PC-9 (cell line): ENCODE measurements at regions of chr1 and their contacts with region 1.

Region 1: DNA sequence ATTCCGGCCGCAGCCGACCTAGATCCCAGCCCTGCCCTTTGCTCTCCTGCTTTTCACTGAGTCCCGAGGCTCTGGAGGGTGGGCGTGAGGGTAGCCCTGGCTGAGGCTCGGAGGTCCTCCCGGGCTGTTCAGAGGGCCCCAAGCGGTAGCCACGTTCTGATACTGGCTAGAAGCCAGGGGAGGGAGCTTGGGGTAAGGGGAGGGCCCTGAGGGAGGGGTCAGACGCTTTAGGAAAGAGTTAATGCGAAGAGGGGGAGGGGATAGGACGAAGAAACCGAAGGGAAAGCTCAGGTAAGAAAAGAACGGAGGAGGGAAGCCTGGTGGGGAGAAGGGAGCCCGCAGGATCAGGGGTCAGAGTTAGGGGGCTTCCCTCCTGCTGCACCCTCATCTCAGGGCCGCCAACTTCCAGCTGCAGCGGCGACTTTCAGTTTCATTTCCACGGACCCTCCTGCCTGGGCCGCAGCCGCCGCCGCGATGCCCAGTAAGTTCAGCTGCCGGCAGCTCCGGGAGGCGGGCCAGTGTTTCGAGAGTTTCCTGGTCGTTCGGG is at the start of gene MOV10:
- DNase-seq: peak; percentile 64 to 69
- H3K4me3 ChIP-seq: peak within 1 kb of the TSS; percentile 82
- H3K27ac ChIP-seq: peak within 1 kb of the TSS; percentile 48
- H3K4me1 ChIP-seq: peaks cover 21% of the 10 kb centered on the region
- H3K27me3 ChIP-seq: no peaks in the 10 kb centered on the region
- CTCF ChIP-seq: no peak
- total RNA-seq, gene MOV10: 73.7 and 78.3 TPM in 2 replicates

Region 2: DNA sequence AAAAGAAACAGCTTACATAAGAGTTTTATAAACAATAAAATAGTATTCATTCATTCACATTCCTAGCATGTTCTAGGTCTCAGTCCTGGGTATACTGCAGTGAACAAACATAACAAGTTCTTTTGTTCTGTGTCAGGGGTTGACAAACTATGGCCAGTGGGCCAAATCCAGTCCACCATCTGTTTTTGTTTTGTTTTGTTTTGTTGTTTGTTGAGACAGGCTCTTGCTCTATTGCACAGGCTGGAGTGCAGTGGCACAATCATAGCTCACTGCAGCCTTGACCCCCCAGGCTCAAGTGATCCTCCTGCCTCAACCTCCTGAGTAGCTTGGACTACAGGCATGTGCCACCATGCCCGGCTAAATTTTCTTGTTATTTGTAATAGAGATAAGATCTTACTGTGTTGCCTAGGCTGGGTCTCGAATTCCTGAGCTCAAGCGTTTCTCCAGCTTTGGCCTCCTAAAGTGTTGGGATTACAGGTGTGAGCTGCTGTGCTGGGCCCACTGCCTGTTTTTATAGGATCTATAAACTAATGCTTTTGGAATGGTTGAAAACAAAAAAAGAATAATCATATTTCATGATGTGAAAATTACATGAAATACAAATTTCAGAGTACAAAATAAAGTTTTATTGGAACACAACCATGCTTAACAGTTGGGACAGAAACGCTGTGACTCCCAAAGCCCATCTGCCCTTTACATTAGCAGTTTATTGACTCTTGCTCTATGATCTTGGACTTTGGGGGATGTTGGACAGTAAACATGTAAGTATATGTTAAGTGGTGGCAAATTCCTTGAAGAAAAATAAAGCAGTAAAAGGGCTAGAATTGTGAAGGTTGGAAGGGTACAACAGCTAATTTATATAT is 37.0 kb before region 1 on chr1:
- CTCF ChIA-PET with region 1: interaction called, 4 read pairs
- POLR2A ChIA-PET with region 1: interaction called, 11 read pairs
- intact Hi-C with region 1: no loop called
- DNase-seq: peak; percentile 9 to 69
- H3K4me3 ChIP-seq: no peak overlapping the region
- H3K27ac ChIP-seq: peak overlapping the region; percentile 59
- H3K4me1 ChIP-seq: peaks cover 40% of the 10 kb centered on the region
- H3K27me3 ChIP-seq: no peaks in the 10 kb centered on the region
- CTCF ChIP-seq: no peak

Region 3: GRCh38 chr1:112698366-112699310 is 24.1 kb after region 1 on chr1:
- CTCF ChIA-PET with region 1: no interaction called
- POLR2A ChIA-PET with region 1: interaction called, 26 read pairs
- intact Hi-C with region 1: no loop called
- DNase-seq: peak; percentile 60 to 79
- H3K4me3 ChIP-seq: no peak overlapping the region
- H3K27ac ChIP-seq: peak overlapping the region; percentile 14; the same call in 1 of the 2 replicates
- H3K4me1 ChIP-seq: peaks cover 55% of the 10 kb centered on the region
- H3K27me3 ChIP-seq: no peaks in the 10 kb centered on the region
- CTCF ChIP-seq: no peak

Region 4: GRCh38 chr1:112714300-112715263 is 40.1 kb after region 1 on chr1:
- CTCF ChIA-PET with region 1: no interaction called
- POLR2A ChIA-PET with region 1: no interaction called
- intact Hi-C with region 1: no loop called
- DNase-seq: peak in 1 of 2 experiments; percentile 25
- H3K4me3 ChIP-seq: peak overlapping the region; percentile 85
- H3K27ac ChIP-seq: no peak overlapping the region
- H3K4me1 ChIP-seq: peaks cover 18% of the 10 kb centered on the region
- H3K27me3 ChIP-seq: no peaks in the 10 kb centered on the region
- CTCF ChIP-seq: peak; percentile 35; the same call in 1 of the 2 replicates

Region 5: DNA sequence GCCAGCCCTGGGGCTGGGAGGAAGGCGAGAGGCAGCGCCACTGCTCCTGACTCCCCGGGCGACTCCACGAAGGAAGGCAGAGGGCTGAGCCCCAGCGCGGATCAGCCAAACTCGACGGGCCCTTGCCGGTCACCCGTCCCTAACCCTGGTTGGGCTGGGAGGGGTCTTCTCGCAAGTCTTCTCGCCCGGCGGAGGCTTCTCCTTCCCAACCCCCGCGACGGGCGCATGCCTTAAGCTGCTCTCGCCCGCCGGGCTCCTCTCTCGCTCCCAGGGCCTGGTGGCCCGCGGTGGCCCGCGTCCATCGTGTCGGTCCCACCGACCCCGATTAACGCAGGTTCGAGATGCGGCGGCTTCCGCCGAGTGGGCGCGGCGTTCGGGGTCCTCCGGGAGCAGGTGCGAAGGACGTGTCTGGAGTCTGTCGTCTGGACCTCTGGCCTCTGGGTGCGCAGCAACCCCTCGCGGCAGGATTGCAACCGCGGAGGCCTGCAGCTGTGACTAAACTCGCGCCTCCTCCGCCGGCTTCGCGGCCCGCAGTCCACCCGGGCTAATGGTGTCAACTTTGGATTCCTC is 69.6 kb after region 1 on chr1:
- CTCF ChIA-PET with region 1: no interaction called
- POLR2A ChIA-PET with region 1: no interaction called
- intact Hi-C with region 1: no loop called
- DNase-seq: peak in 1 of 2 experiments; percentile 49
- H3K4me3 ChIP-seq: no peak overlapping the region; the same call in 1 of the 2 replicates
- H3K27ac ChIP-seq: no peak overlapping the region
- H3K4me1 ChIP-seq: no peaks in the 10 kb centered on the region
- H3K27me3 ChIP-seq: peaks cover 12% of the 10 kb centered on the region
- CTCF ChIP-seq: no peak

Region 6: GRCh38 chr1:112833806-112834205 is 159.3 kb after region 1 on chr1:
- CTCF ChIA-PET with region 1: no interaction called
- POLR2A ChIA-PET with region 1: no interaction called
- intact Hi-C with region 1: no loop called
- DNase-seq: no peak
- H3K4me3 ChIP-seq: no peak overlapping the region
- H3K27ac ChIP-seq: no peak overlapping the region
- H3K4me1 ChIP-seq: peaks cover 26% of the 10 kb centered on the region
- H3K27me3 ChIP-seq: no peaks in the 10 kb centered on the region
- CTCF ChIP-seq: no peak